PC-9 (cell line): ENCODE measurements at regions of chr5 and their contacts with region 1.

Region 1: GRCh38 chr5:178120868-178121357 is 7.6 kb downstream of the N4BP3 start:
- DNase-seq: peak; percentile 46 to 57
- H3K4me3 ChIP-seq: no peak overlapping the region
- H3K27ac ChIP-seq: no peak overlapping the region
- H3K4me1 ChIP-seq: peaks cover 24% of the 10 kb centered on the region
- H3K27me3 ChIP-seq: no peaks in the 10 kb centered on the region
- CTCF ChIP-seq: peak; percentile 64

Region 2: GRCh38 chr5:177537389-177538361 is 583.2 kb before region 1 on chr5:
- CTCF ChIA-PET with region 1: interaction called, 10 read pairs
- POLR2A ChIA-PET with region 1: no interaction called
- intact Hi-C with region 1: no loop called
- DNase-seq: no peak
- H3K4me3 ChIP-seq: no peak overlapping the region
- H3K27ac ChIP-seq: no peak overlapping the region
- H3K4me1 ChIP-seq: no peaks in the 10 kb centered on the region
- H3K27me3 ChIP-seq: no peaks in the 10 kb centered on the region
- CTCF ChIP-seq: no peak

Region 3: GRCh38 chr5:178083943-178084342 is 37.0 kb before region 1 on chr5:
- CTCF ChIA-PET with region 1: no interaction called
- POLR2A ChIA-PET with region 1: no interaction called
- intact Hi-C with region 1: no loop called
- DNase-seq: peak in 1 of 2 experiments; percentile 73
- H3K4me3 ChIP-seq: no peak overlapping the region
- H3K27ac ChIP-seq: no peak overlapping the region
- H3K4me1 ChIP-seq: peaks cover 47% of the 10 kb centered on the region
- H3K27me3 ChIP-seq: no peaks in the 10 kb centered on the region
- CTCF ChIP-seq: no peak

Region 4: GRCh38 chr5:178104492-178104891 is 16.4 kb before region 1 on chr5:
- CTCF ChIA-PET with region 1: no interaction called
- POLR2A ChIA-PET with region 1: no interaction called
- intact Hi-C with region 1: loop called (anchors 2 kb)
- DNase-seq: peak; percentile 49 to 67
- H3K4me3 ChIP-seq: no peak overlapping the region
- H3K27ac ChIP-seq: no peak overlapping the region
- H3K4me1 ChIP-seq: peaks cover 60% of the 10 kb centered on the region
- H3K27me3 ChIP-seq: no peaks in the 10 kb centered on the region
- CTCF ChIP-seq: no peak

Region 5: DNA sequence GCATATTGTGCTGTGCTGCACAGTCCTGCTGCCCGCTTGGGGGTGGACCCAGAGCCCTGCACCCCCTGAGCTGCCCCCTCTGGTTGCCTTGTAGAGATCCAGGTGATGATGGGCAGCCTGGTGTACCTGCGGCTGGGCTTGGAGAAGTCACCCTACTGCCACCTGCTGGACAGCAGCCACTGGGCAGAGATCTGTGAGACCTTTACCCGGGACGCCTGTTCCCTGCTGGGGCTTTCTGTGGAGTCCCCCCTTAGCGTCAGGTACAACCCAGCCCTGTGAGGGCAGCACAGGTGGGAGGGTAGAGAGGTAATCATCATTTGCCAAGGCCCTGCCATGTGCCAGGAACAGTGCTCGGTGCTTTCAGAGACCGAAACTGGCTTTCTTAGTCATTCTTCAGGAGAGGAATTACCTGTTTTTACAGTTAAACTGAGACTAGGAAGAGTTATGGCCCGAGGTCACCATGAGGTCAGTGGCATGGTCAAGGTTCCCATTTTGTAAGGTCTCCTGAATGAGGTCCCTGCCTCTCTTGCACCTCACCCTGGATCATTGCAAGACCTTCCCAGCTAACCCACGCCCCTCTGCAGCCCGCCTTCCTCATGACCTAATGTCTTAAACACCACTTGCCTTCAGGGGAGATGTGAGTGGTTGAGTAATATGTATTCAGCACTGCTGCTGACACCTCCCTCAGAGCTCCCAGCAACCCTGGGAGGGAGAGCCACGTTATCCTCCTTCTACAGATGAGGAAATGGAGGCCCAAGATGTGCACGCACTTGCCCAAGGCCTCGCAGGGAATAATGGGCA is 25.3 kb after region 1 on chr5:
- CTCF ChIA-PET with region 1: interaction called, 6 read pairs
- POLR2A ChIA-PET with region 1: no interaction called
- intact Hi-C with region 1: loop called (anchors 2 kb)
- DNase-seq: peak; percentile 81 to 98
- H3K4me3 ChIP-seq: no peak overlapping the region
- H3K27ac ChIP-seq: peak overlapping the region; percentile 97
- H3K4me1 ChIP-seq: peaks cover 32% of the 10 kb centered on the region
- H3K27me3 ChIP-seq: no peaks in the 10 kb centered on the region
- CTCF ChIP-seq: peak; percentile 95